ENCODE measurements at regions of chrX and their contacts with region 1.

Region 1: GRCh38 chrX:73850124-73851013 is 287.4 kb downstream of the CHIC1 start:
- DNase-seq: no peak
- H3K4me3 ChIP-seq: peak overlapping the region in 2 of 4 donors; percentile 63 to 72
- H3K27ac ChIP-seq: peak overlapping the region in 2 of 4 donors; percentile 44 to 79
- H3K4me1 ChIP-seq: peaks cover 0 to 40% (median 9%) of the 10 kb centered on the region in 4 donors
- H3K27me3 ChIP-seq: no peaks in the 10 kb centered on the region
- CTCF ChIP-seq: peak in 1 of 3 experiments; percentile 3
- EP300 ChIP-seq: no peak
- POLR2A ChIP-seq: no peak

Region 2: GRCh38 chrX:73943693-73944562 is 93.6 kb after region 1 on chrX:
- intact Hi-C with region 1: loop called (anchors 2 kb)
- DNase-seq: peak; percentile 92
- H3K4me3 ChIP-seq: peak overlapping the region; percentile 61 to 91 (median 76)
- H3K27ac ChIP-seq: peak overlapping the region; percentile 77 to 87 (median 84)
- H3K4me1 ChIP-seq: peaks cover 15 to 39% (median 15%) of the 10 kb centered on the region in 4 donors
- H3K27me3 ChIP-seq: no peaks in the 10 kb centered on the region
- CTCF ChIP-seq: peak in 1 of 3 experiments; percentile 8
- EP300 ChIP-seq: no peak
- POLR2A ChIP-seq: no peak

Measured in esophagus muscularis mucosa (tissue), 4 donors.